Psoas muscle (tissue), 8 donors: ENCODE measurements at regions of chr9 and their contacts with region 1.

Region 1: DNA sequence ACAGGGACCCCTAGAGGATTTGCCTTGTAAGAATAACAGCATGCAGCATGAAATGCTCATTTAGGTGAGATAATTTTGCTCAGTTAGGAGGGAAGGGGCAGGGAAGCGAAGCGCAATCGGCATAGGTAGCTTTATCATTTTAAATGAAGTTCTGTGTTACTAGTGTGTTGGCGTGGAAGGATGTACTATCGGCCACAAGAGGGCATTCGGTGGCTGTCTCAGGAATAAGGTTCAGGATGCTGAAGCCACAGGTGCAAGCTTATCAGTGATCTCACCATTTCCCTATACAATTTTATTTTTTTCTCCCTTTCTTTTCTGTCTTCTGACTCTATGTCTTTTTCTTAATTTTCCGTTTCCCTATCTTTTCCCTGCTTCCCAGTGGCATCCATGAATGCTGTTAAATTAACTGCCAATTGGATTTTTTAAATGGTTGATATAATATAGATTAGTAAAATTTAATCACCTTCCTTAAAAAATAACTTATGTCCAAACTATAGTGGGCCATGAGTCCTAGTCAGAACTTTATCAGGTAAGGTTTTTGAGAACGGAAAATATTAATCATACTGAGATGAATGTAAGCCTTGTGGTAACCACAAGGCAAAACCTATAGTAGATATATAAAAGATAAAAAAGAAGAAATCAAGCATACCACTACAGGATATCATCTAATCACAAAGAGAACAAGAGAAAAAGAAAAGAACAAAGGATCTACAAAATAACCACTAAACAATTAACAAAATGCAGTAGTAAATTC is 1.2 kb upstream of the INSL6 start:
- DNase-seq: no peak
- ATAC-seq: peak in 3 of 4 donors; percentile 53 to 77 (median 62)
- H3K4me3 ChIP-seq: no peak overlapping the region
- H3K27ac ChIP-seq: no peak overlapping the region
- H3K4me1 ChIP-seq: no peaks in the 10 kb centered on the region
- H3K27me3 ChIP-seq: peaks cover 0 to 3% (median 0%) of the 10 kb centered on the region in 3 donors
- CTCF ChIP-seq: peak; percentile 70

Region 2: GRCh38 chr9:5146241-5146908 is 40.2 kb before region 1 on chr9:
- intact Hi-C with region 1: no loop called
- DNase-seq: no peak
- ATAC-seq: no peak
- H3K4me3 ChIP-seq: no peak overlapping the region
- H3K27ac ChIP-seq: no peak overlapping the region
- H3K4me1 ChIP-seq: no peaks in the 10 kb centered on the region
- H3K27me3 ChIP-seq: no peaks in the 10 kb centered on the region
- CTCF ChIP-seq: no peak

Region 3: GRCh38 chr9:5265939-5266338 is 79.3 kb after region 1 on chr9:
- intact Hi-C with region 1: no loop called
- DNase-seq: no peak
- ATAC-seq: no peak
- H3K4me3 ChIP-seq: no peak overlapping the region
- H3K27ac ChIP-seq: no peak overlapping the region
- H3K4me1 ChIP-seq: no peaks in the 10 kb centered on the region
- H3K27me3 ChIP-seq: no peaks in the 10 kb centered on the region
- CTCF ChIP-seq: no peak

Region 4: DNA sequence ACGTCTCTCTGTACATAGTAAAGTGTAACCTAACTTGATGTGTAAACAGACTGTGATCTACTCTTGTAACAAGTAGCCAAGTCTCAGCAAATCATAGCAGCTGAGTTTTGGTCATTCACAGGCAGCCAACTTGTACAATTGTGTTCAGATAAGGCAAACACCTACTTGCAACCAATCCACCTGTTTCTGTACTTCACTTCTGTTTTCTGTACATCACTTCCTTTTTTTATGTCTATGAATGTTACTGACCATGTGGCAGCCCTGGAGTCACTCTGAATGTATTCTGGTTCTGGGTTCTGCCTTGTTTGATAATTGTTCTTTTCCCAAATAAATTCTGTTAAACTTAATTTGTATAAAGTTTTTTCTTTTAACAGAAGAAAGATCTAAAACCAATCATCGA is 91.9 kb after region 1 on chr9:
- intact Hi-C with region 1: no loop called
- DNase-seq: no peak
- ATAC-seq: no peak
- H3K4me3 ChIP-seq: no peak overlapping the region
- H3K27ac ChIP-seq: no peak overlapping the region
- H3K4me1 ChIP-seq: no peaks in the 10 kb centered on the region
- H3K27me3 ChIP-seq: no peaks in the 10 kb centered on the region
- CTCF ChIP-seq: no peak

Region 5: DNA sequence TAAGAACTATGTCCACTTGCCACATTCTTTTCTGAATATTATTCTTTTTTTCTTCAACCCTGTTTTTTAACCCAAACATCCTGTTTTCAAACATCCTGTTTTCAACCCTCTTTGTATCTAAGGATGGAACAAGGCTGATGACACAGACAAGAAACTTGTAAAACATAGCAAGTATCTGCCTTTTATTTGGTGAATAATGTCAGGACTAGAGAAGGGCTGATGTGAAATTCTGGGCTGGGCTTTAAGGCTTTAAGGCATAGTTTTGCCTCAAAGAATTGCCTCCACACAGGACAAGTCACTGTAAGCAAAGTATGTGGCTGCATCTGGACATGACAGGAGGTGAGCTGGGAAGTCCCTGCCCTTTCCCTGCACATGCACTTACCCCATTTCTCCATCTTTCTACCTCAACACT is 399.8 kb after region 1 on chr9:
- intact Hi-C with region 1: loop called (anchors 5 kb)
- DNase-seq: no peak
- ATAC-seq: no peak
- H3K4me3 ChIP-seq: no peak overlapping the region
- H3K27ac ChIP-seq: no peak overlapping the region
- H3K4me1 ChIP-seq: no peaks in the 10 kb centered on the region
- H3K27me3 ChIP-seq: no peaks in the 10 kb centered on the region
- CTCF ChIP-seq: no peak

Region 6: GRCh38 chr9:5593904-5594303 is 407.3 kb after region 1 on chr9:
- intact Hi-C with region 1: loop called (anchors 5 kb)
- DNase-seq: no peak
- ATAC-seq: no peak
- H3K4me3 ChIP-seq: no peak overlapping the region
- H3K27ac ChIP-seq: no peak overlapping the region
- H3K4me1 ChIP-seq: peaks cover 5% of the 10 kb centered on the region
- H3K27me3 ChIP-seq: no peaks in the 10 kb centered on the region
- CTCF ChIP-seq: no peak

Region 7: DNA sequence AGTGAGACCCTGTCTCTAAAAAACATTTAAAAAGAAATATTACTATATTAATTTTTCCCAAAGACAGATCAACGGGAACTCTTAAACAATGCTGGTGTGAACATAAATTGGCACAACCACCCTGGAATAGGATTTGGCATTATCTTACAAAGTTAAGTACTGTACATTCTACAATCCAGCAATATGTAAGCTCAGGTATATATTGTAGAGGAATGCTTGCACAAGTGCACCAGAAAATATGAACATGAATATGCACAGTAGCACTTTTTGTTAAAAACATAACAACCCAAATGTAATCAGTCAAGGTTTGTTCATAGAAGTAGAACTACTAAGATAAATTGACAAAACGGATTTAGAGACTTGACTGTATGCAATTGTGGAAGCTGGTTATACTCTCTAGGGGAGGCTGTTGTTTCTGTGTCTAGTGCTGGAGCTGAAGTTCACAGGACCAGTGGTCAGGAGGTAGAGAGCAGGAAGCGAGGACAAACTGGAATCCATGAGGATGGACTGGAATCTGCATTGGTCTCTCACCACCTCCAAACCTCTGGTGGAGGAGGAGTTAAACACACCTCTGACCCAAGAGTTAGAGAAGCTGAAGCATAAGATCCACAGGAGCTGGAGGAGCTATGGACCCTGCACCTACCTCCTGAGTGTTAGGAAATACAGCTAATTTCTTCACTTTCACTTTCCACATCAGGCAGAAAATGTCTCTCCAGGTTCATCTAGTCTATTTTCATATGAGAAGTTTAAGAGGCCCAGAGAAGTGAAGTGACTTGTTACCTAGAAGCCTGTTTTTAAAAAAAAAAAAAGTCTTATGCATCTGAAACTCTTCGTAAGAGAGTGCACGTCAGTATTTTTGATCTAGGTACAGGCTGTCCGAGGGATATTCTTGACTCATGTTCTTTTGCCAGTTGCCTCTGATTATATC is 422.0 kb after region 1 on chr9:
- intact Hi-C with region 1: loop called in 1 of 2 experiments (anchors 5 kb)
- DNase-seq: no peak
- ATAC-seq: peak; percentile 73 to 91 (median 86)
- H3K4me3 ChIP-seq: peak overlapping the region; percentile 58
- H3K27ac ChIP-seq: peak overlapping the region; percentile 48
- H3K4me1 ChIP-seq: peaks cover 3% of the 10 kb centered on the region
- H3K27me3 ChIP-seq: no peaks in the 10 kb centered on the region
- CTCF ChIP-seq: no peak